Psoas muscle (tissue), 8 donors: ENCODE measurements at regions of chr18 and their contacts with region 1.

Region 1: DNA sequence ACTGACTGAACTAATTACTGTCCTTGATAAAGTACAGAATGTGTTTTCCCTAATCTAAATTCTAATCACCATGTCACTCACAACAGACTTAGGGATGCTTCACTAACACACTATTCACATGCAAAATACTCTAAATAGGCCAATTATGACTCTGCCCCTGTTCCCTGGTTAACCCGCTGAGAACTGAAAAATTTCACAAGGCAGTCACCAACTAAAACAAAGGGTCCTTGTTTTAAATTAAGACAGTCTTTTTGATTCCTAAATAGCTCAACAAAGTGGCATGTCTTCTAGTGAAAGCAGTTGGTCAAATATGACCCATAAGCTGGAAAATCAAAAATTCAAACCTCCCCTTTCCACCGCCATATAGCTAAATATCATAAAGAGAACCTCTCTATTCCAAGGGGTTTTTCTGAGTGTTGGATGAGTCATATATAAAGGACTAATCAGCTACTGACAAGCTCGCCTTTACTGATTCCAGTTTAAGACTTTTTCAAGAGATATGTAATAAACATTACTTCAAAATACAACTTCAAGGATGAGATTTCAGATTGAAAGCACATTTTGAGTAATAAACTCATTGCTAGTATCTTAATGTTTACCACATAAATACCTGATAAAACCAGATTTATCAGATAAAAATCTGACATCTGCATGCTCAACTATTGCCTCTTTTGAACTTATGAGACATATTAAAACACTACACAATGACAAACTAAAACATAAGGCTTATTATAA is 235.8 kb downstream of the TCF4 start:
- DNase-seq: no peak
- ATAC-seq: no peak
- H3K4me3 ChIP-seq: no peak overlapping the region
- H3K27ac ChIP-seq: no peak overlapping the region
- H3K4me1 ChIP-seq: peaks cover 15% of the 10 kb centered on the region
- H3K27me3 ChIP-seq: no peaks in the 10 kb centered on the region
- CTCF ChIP-seq: no peak

Region 2: GRCh38 chr18:55384551-55385275 is 32.6 kb after region 1 on chr18:
- intact Hi-C with region 1: loop called in 1 of 2 experiments (anchors 5 kb)
- DNase-seq: no peak
- ATAC-seq: peak in 2 of 4 donors; percentile 36
- H3K4me3 ChIP-seq: no peak overlapping the region
- H3K27ac ChIP-seq: no peak overlapping the region
- H3K4me1 ChIP-seq: peaks cover 29% of the 10 kb centered on the region
- H3K27me3 ChIP-seq: no peaks in the 10 kb centered on the region
- CTCF ChIP-seq: peak; percentile 39